Activated CD4-positive, alpha-beta memory T cell treated with anti-CD3 and anti-CD28 coated beads for 36 hours (primary cell): ENCODE measurements at regions of chr3 and their contacts with region 1.

Region 1: DNA sequence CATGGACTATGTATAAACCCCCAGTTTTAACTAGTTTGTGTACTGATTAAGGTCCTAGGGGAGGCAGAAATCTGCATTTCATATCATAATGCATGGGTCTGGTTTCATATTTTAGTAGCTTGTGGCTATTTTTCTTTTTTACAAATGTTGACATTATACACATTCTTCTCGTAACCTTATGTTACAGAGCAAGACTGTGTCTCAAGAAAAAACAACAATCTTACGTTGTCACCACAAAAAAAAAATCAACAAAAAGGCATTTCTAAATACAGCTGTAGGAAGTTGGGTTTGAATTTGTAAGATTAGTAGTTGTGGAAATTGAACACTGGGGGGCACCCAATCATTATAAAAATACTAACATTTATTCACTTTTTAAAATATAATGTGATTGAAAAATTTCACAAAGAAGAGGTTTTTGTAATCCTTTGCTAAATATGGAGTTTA is 17.9 kb downstream of the SERP1 start:
- DNase-seq: no peak
- H3K4me3 Mint-ChIP-seq: no peak overlapping the region
- H3K27ac Mint-ChIP-seq: no peak overlapping the region
- H3K4me1 Mint-ChIP-seq: peaks cover 6% of the 10 kb centered on the region
- H3K27me3 Mint-ChIP-seq: no peaks in the 10 kb centered on the region

Region 2: DNA sequence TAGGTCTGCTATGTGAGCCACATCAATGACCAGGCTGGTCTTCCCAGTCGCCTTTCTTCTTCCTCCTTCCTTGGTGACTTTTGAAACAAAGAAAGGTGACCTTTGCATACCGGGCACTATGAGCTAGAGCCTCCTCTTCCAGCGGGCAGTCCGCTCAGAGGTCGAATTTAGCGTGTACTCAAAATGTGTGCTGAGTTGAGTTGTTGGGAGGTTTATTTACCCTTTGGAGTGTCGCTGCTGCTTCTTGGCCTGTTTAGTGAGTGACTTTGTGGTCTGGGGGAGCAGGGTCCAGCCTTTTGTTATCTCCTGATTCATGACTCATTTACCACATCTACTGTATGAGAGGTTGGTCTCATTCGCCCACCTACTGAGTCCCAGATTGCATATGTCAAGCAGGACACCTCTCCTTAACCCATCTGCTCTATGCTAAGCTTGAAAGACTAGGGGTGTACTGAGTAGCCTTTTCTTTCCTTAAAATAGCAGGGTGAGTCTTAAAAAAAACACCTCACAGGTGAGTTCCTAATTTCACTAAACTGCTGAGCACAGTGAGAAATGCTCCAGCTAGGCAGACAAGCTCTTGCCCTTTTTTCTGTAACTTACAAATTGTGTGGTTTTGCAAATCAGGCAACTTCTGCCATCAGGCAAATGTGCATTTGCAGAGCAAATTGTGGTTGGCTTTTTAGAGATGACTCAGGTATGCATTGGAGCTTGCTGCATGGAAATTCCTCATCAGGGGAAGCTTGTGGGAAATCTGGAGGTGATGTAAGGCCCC is 237.8 kb after region 1 on chr3:
- CTCF ChIA-PET with region 1: no interaction called
- POLR2A ChIA-PET with region 1: no interaction called
- intact Hi-C with region 1: no loop called
- DNase-seq: peak; percentile 57
- H3K4me3 Mint-ChIP-seq: peak overlapping the region; percentile 99
- H3K27ac Mint-ChIP-seq: peak overlapping the region; percentile 100
- H3K4me1 Mint-ChIP-seq: peaks cover 36% of the 10 kb centered on the region
- H3K27me3 Mint-ChIP-seq: no peaks in the 10 kb centered on the region

Region 3: GRCh38 chr3:150870396-150870795 is 342.0 kb after region 1 on chr3:
- CTCF ChIA-PET with region 1: no interaction called
- POLR2A ChIA-PET with region 1: no interaction called
- intact Hi-C with region 1: loop called (anchors 2 kb)
- DNase-seq: no peak
- H3K4me3 Mint-ChIP-seq: no peak overlapping the region
- H3K27ac Mint-ChIP-seq: no peak overlapping the region
- H3K4me1 Mint-ChIP-seq: peaks cover 1% of the 10 kb centered on the region
- H3K27me3 Mint-ChIP-seq: peaks cover 14% of the 10 kb centered on the region